ENCODE measurements at regions of chr19 and their contacts with region 1.

Region 1: GRCh38 chr19:18940769-18941407 is at the start of gene HOMER3:
- DNase-seq: peak; percentile 78
- H3K4me3 Mint-ChIP-seq: peak within 1 kb of the TSS; percentile 82
- H3K27ac Mint-ChIP-seq: peak within 1 kb of the TSS; percentile 89
- H3K4me1 Mint-ChIP-seq: peaks cover 8% of the 10 kb centered on the region
- H3K27me3 Mint-ChIP-seq: no peaks in the 10 kb centered on the region
- CTCF ChIP-seq: no peak
- total RNA-seq, gene HOMER3: 19.0 and 20.2 TPM in 2 replicates

Region 2: GRCh38 chr19:18967358-18968146 is 26.7 kb after region 1 on chr19:
- CTCF ChIA-PET with region 1: no interaction called
- intact Hi-C with region 1: no loop called
- DNase-seq: no peak
- H3K4me3 Mint-ChIP-seq: no peak overlapping the region
- H3K27ac Mint-ChIP-seq: no peak overlapping the region
- H3K4me1 Mint-ChIP-seq: no peaks in the 10 kb centered on the region
- H3K27me3 Mint-ChIP-seq: peaks cover 3% of the 10 kb centered on the region
- CTCF ChIP-seq: no peak

Region 3: GRCh38 chr19:18998276-18998675 is 57.4 kb after region 1 on chr19:
- CTCF ChIA-PET with region 1: interaction called, 10 read pairs
- intact Hi-C with region 1: no loop called
- DNase-seq: no peak
- H3K4me3 Mint-ChIP-seq: no peak overlapping the region
- H3K27ac Mint-ChIP-seq: no peak overlapping the region
- H3K4me1 Mint-ChIP-seq: peaks cover 11% of the 10 kb centered on the region
- H3K27me3 Mint-ChIP-seq: no peaks in the 10 kb centered on the region
- CTCF ChIP-seq: no peak